PC-3 (cell line): ENCODE measurements at regions of chr19 and their contacts with region 1.

Region 1: GRCh38 chr19:6460101-6460853 is 685 bp upstream of the SLC25A23 start:
- DNase-seq: peak; percentile 99
- ATAC-seq: peak; percentile 73
- H3K4me3 ChIP-seq: peak overlapping the region; percentile 68
- H3K27ac ChIP-seq: peak overlapping the region; percentile 8; the same call in 1 of the 2 replicates
- H3K4me1 ChIP-seq: peaks cover 14% of the 10 kb centered on the region
- H3K27me3 ChIP-seq: no peaks in the 10 kb centered on the region
- CTCF ChIP-seq: peak; percentile 71

Region 2: DNA sequence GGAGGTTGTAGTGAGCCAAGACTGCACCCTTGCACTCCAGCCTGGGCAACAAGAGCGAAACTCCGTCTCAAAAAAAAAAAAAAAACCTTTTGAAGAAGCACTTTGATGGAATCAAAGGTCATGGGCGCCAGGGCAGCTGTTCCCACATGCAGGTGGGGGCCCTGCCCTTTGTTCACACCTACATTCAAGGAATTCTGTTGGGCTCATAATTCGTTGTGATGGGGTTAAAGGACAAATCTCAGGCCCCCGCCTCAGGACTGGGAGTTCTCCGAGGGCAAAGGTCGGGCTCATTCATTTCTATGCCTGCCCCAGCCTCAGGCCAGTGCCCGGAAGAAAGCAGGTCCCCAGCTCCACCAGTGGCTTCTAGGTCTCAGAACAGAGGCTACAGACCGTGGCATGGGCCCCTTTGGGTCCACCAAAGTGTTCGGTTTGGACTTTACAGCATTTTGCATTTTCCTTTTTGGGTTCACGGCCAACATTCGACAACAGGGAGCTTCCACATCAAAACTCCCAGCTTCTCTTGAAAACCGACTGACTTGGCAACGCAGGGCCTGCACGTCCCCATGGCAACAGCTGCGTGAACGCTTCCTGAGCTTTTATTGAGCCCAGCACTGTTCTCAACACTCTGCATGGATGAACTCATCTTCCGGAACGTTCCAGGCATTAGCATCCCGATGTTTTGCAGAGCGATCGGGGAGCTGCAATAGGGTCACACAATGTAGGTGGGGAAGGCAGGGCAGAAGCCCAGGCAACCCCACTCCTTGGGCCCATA is 57.3 kb before region 1 on chr19:
- CTCF ChIA-PET with region 1: no interaction called
- POLR2A ChIA-PET with region 1: no interaction called
- intact Hi-C with region 1: no loop called
- DNase-seq: no peak
- ATAC-seq: no peak
- H3K4me3 ChIP-seq: no peak overlapping the region
- H3K27ac ChIP-seq: no peak overlapping the region
- H3K4me1 ChIP-seq: no peaks in the 10 kb centered on the region
- H3K27me3 ChIP-seq: no peaks in the 10 kb centered on the region
- CTCF ChIP-seq: no peak

Region 3: DNA sequence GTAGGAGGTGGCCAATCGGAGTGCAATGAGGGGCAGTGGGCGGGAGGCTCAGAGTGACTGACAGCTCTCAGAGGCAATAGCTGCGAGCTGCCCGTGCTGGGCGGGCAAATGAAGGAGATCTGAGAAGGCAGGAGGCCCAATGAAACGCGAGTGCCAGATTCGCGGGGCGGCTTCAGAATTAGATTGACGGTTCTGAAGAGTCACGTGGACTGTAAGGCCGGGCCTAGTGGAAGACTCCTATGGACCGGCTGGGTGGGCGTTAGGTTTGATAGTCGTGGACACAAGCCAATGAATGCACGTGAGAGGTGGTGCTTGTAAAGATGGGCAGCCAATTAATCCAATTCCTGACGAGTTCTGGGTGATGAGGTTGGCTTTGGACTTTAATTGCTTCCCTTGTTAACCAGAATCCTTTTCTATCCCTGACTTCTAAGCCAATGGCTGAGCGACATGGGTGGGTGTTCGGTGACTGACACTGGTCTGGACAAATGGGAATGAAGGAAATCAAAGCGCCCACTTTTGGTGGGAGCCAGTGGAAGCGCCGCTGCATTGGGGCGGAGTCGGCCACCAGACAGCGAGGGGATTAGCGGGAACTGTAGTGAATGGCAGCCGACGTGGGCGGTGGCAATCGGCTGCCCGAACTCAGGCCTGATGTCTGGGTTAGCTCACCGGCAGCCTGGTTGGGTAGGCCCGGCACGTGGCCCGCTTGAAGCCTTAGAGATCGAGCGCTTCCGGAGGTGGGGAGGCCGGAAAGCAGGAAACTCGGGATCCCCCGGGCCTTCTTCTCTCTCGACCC is 35.1 kb before region 1 on chr19:
- CTCF ChIA-PET with region 1: no interaction called
- POLR2A ChIA-PET with region 1: no interaction called
- intact Hi-C with region 1: loop called (anchors 1 kb)
- DNase-seq: peak; percentile 100
- ATAC-seq: peak; percentile 92
- H3K4me3 ChIP-seq: no peak overlapping the region
- H3K27ac ChIP-seq: no peak overlapping the region
- H3K4me1 ChIP-seq: peaks cover 17% of the 10 kb centered on the region; the same call in 1 of the 2 replicates
- H3K27me3 ChIP-seq: no peaks in the 10 kb centered on the region
- CTCF ChIP-seq: no peak

Region 4: DNA sequence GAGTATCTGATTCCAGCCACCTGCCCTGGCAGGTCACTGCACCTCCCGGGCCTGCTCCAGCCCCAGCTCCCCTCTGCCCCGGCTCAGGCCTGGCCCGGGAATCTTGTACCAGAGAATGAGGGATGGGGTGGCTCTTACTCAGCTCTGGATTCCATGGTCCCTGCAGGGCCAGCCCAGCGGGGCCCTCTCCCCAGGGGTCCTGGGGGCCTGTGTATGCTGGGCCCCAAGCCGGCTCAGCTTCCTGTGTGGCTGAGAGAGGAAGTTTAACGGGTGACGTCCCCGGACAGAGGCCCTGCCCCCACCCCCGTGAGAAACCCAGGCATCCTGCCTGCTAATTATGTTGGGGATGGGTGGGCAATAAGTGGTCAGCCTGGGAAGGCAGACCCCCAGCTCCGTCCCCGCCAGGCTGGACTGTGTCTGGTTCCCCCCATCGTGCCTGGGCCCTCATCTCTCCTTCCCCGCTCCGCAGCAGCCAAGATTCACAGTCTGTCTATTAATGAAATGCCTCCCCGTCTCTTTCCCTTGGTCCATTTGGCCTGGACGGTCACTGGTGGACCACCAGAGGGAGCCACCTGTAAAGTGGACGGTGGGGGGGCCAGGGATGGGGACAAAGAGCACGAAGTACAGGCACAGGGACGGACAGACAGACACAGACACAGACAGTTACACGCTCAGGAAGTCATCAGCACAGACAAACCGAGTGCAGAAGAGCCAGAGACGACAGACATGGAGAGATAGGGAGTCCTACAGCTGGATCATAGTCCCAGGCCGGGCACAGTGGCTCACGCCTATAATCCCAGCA is 21.5 kb after region 1 on chr19 and contains the start of gene DENND1C:
- CTCF ChIA-PET with region 1: no interaction called
- POLR2A ChIA-PET with region 1: no interaction called
- intact Hi-C with region 1: no loop called
- DNase-seq: peak; percentile 35
- ATAC-seq: peak; percentile 52
- H3K4me3 ChIP-seq: no peak within 1 kb of the TSS
- H3K27ac ChIP-seq: no peak within 1 kb of the TSS
- H3K4me1 ChIP-seq: no peaks in the 10 kb centered on the region
- H3K27me3 ChIP-seq: no peaks in the 10 kb centered on the region
- CTCF ChIP-seq: peak; percentile 71
- total RNA-seq, gene DENND1C: not detected in 2 replicates

Region 5: DNA sequence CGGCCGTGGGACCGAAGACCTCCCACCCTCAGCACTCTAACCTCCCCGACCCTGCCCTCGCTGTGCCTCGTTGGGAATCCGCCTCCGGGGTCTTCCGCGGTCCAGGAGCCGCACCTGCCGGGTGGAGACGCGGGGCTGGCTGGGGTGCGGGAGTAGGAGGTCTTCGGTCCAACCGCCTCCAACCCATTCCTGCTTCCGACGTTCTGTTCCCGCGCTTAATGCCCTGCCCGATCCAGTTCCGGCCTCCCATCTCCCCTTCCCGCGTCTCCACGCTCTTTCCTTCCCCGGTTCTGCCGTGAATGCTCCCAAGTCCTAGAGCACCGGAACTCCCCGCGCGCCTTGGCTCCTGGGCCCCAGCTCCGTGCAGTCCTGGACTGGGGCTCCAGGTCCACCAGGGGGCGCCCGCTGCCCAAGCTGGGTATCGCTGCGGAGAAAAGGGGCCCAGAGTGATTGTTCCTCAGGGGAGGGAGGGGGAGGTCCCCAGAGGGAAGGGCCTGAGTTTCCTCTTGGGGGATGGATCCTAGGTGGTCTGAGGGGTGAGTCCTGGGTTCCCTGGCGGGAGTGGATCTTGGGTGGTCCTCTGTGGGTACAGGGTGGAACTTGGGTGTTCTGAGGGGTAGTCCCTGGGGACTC is 56.5 kb after region 1 on chr19:
- CTCF ChIA-PET with region 1: no interaction called
- POLR2A ChIA-PET with region 1: no interaction called
- intact Hi-C with region 1: loop called (anchors 1 kb)
- DNase-seq: peak; percentile 93
- ATAC-seq: peak; percentile 86
- H3K4me3 ChIP-seq: peak overlapping the region; percentile 74
- H3K27ac ChIP-seq: no peak overlapping the region
- H3K4me1 ChIP-seq: peaks cover 15% of the 10 kb centered on the region
- H3K27me3 ChIP-seq: no peaks in the 10 kb centered on the region
- CTCF ChIP-seq: peak; percentile 99

Region 6: GRCh38 chr19:6610934-6611852 is 150.9 kb after region 1 on chr19:
- CTCF ChIA-PET with region 1: no interaction called
- POLR2A ChIA-PET with region 1: no interaction called
- intact Hi-C with region 1: loop called (anchors 5 kb)
- DNase-seq: peak; percentile 98
- ATAC-seq: peak; percentile 85
- H3K4me3 ChIP-seq: peak overlapping the region; percentile 36; the same call in 1 of the 2 replicates
- H3K27ac ChIP-seq: peak overlapping the region; percentile 92
- H3K4me1 ChIP-seq: peaks cover 29% of the 10 kb centered on the region
- H3K27me3 ChIP-seq: no peaks in the 10 kb centered on the region
- CTCF ChIP-seq: no peak